Left cardiac atrium (tissue), 4 donors: ENCODE measurements at regions of chr9 and their contacts with region 1.

Region 1: DNA sequence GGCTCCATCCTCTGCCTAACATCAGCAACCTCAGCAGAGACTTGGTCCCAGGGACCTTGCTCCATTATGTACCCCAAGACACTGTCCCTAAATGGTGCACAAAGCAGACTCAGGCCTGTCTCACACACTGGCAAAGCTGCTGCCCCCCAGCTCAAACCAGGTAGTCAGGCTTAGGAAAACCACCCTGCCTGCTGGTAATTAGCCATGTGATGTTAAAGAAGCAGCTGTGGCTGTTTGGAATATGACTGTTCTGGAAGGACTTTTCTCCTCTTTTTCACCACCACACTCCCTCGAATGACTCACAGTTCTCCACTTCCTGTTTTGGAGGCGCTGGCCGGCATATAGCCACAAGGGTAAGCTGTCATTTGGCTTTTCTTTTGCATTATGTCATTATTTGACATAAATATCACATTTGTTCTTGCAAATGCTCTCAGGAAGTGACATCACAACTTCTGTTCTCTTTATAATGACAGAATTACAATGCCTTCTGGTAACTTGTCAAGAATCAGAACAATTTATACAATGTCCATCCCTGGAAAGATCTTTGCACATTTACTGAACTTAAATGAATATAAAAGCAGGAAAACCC is 113.9 kb downstream of the SUSD1 start:
- DNase-seq: peak; percentile 69
- ATAC-seq: peak; percentile 59 to 93

Region 2: GRCh38 chr9:111896353-111896958 is 164.8 kb before region 1 on chr9 and contains the start of gene UGCG:
- intact Hi-C with region 1: loop called in 1 of 2 experiments (anchors 10 kb)
- DNase-seq: peak; percentile 90
- ATAC-seq: peak; percentile 99
- total RNA-seq, gene UGCG: 12.7 to 21.1 TPM

Region 3: DNA sequence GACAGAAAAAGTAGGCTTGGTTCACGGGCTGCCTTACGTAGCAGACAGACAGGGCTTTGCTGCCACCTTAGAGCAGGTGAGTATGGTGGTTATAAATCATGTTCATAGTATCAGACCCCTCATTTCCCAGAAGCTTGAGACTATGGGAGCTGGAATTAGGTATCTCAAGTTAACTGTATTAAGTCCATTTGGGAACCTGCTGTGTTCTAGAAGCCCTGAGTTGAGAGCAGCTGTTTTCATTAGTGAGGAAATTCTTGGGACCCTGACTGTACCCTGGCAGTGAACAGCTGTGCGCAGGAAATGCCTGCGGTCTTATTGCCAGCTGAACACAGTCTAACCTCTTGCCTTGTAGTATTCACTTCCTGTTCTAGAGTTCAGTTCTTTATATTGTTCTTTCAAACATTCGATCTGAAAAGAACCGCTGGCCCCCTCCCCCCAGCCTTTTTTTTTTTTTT is 134.8 kb before region 1 on chr9:
- intact Hi-C with region 1: loop called in 1 of 2 experiments (anchors 10 kb)
- DNase-seq: peak; percentile 36
- ATAC-seq: peak; percentile 84 to 90

Region 4: DNA sequence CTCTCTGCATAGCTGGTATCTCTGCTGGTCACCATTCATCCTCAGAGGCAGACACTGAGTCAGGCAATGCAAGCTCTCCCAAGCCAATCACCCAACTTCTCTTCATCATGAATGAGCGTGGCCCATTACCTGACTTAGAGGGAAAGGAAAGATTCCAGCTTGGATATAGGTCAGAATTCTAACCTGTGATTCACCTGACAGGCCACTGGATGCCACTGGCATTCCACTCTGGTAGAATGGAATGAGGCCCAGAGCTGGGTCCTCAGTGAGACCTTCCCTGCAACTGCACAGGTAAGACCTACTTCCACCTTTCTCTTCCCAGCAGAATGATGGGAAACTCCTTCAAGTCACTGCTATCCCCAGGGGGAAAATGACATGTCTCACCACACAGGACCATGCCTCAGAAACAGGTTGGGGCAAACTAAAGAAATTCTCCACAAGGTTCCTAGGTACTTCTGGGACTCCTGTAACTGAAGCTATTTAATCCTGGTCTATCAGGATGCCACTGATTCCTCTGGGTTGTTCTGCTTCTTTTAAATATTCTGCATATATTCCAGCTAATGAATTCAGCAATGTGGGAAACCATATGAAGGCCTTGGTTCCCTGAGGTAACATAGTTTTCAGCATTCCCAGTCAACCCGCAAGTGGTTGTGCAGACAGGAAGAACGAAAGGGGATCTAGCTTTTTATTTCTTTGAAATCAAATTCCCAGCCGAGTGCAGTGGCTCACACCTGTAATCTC is 51.9 kb after region 1 on chr9:
- intact Hi-C with region 1: no loop called
- DNase-seq: no peak
- ATAC-seq: peak; percentile 55 to 59